ENCODE measurements at regions of chr13 and their contacts with region 1.

Region 1: GRCh38 chr13:36275190-36276002 is 22.2 kb downstream of the CCDC169 start:
- DNase-seq: no peak
- H3K4me3 ChIP-seq: no peak overlapping the region
- H3K27ac ChIP-seq: no peak overlapping the region
- H3K4me1 ChIP-seq: no peaks in the 10 kb centered on the region
- H3K27me3 ChIP-seq: no peaks in the 10 kb centered on the region
- CTCF ChIP-seq: peak; percentile 60 to 73 (median 64)
- EP300 ChIP-seq: no peak
- POLR2A ChIP-seq: no peak

Region 2: GRCh38 chr13:35978603-35979316 is 296.6 kb before region 1 on chr13:
- intact Hi-C with region 1: loop called (anchors 1 kb)
- DNase-seq: no peak
- H3K4me3 ChIP-seq: no peak overlapping the region
- H3K27ac ChIP-seq: peak overlapping the region; percentile 70 to 82 (median 76)
- H3K4me1 ChIP-seq: peaks cover 4 to 20% (median 16%) of the 10 kb centered on the region in 4 donors
- H3K27me3 ChIP-seq: no peaks in the 10 kb centered on the region
- CTCF ChIP-seq: peak; percentile 78 to 84 (median 82)
- EP300 ChIP-seq: no peak
- POLR2A ChIP-seq: no peak